ENCODE measurements at regions of chr18 and their contacts with region 1.

Region 1: DNA sequence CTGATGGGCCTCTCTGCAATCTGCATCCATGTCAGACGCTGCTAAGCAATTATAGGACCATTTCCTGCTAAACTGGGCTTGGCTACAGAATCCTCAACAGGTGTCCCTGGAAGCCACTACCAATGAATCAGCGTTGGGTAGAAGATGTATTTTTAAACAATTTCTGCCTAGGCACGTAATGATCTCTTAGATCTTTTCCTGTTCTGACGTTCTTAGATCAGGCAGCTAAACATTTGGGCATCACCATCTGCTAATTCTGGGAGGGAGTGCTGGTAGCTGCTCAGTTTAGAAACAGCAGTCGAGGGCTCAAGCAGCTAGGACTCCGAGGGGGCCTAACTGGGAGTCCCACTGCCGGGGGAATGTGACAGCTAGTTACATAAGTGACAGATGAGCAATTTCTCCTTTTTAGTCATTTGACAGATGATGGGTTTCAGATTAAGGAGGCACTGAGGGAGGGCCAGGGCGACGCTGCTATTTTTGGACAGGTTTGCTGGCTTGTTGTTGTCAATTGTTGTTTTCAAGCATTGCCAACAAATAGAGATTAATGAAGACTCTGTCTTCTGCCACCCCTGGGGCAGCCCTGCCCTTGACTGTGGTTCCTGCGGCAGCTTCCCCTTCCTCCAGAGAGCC is 92.7 kb downstream of the MRO start:
- DNase-seq: no peak
- ATAC-seq: peak in 2 of 4 donors; percentile 4 to 31
- H3K4me3 ChIP-seq: no peak overlapping the region
- H3K27ac ChIP-seq: peak overlapping the region in 9 of 12 donors; percentile 17 to 78 (median 72)
- H3K4me1 ChIP-seq: peaks cover 0 to 35% (median 14%) of the 10 kb centered on the region in 12 donors
- H3K27me3 ChIP-seq: no peaks in the 10 kb centered on the region
- CTCF ChIP-seq: no peak
- POLR2A ChIP-seq: no peak

Region 2: GRCh38 chr18:50649821-50650220 is 77.3 kb before region 1 on chr18:
- intact Hi-C with region 1: loop called in 3 of 10 experiments (anchors 5 to 10 kb)
- DNase-seq: peak; percentile 72 to 86 (median 79)
- ATAC-seq: peak; percentile 80 to 93 (median 86)
- H3K4me3 ChIP-seq: peak overlapping the region in 5 of 12 donors; percentile 1 to 20 (median 8)
- H3K27ac ChIP-seq: peak overlapping the region; percentile 69 to 96 (median 86)
- H3K4me1 ChIP-seq: peaks cover 0 to 52% (median 20%) of the 10 kb centered on the region in 12 donors
- H3K27me3 ChIP-seq: no peaks in the 10 kb centered on the region
- CTCF ChIP-seq: no peak
- POLR2A ChIP-seq: peak in 1 of 2 donors; percentile 12

Region 3: GRCh38 chr18:50786864-50787263 is 59.8 kb after region 1 on chr18:
- intact Hi-C with region 1: no loop called
- DNase-seq: no peak
- ATAC-seq: no peak
- H3K4me3 ChIP-seq: no peak overlapping the region
- H3K27ac ChIP-seq: no peak overlapping the region
- H3K4me1 ChIP-seq: no peaks in the 10 kb centered on the region
- H3K27me3 ChIP-seq: no peaks in the 10 kb centered on the region
- CTCF ChIP-seq: no peak
- POLR2A ChIP-seq: no peak

Measured in heart left ventricle (tissue), 16 donors.